AG04449 (cell line): ENCODE measurements at regions of chr2 and their contacts with region 1.

Region 1: DNA sequence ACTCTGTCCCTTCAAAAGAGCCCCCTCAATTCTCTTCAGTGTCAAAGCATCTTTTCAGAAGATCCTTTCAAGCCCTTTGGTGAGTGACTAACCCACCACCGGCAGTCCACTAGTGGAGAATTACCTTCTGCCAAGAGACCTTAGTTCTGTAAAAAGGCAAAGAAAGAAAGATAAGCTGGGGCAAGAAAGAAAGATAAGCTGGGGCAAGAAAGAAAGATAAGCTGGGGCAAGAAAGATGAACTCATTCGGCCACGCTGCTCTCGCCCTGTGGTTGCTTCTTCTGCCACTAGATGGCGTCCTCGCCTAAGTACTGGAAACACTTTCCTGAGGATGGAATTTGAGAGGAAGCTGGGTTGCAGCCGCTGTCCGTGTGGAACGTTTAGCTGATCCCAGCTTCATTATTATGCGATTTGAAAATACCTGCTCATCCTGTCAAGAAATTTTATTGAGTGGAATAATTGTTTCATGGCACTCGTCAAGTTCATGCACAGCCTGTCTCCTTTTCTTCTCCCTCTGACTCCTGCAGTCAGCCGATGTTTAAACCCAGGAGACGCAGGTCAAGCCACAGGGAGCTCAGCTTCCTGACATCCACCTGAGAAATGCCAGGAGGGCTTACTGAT is 17.3 kb upstream of the ANXA4 start:
- DNase-seq: no peak
- H3K4me3 ChIP-seq: peak overlapping the region; percentile 47
- CTCF ChIP-seq: peak; percentile 79

Region 2: DNA sequence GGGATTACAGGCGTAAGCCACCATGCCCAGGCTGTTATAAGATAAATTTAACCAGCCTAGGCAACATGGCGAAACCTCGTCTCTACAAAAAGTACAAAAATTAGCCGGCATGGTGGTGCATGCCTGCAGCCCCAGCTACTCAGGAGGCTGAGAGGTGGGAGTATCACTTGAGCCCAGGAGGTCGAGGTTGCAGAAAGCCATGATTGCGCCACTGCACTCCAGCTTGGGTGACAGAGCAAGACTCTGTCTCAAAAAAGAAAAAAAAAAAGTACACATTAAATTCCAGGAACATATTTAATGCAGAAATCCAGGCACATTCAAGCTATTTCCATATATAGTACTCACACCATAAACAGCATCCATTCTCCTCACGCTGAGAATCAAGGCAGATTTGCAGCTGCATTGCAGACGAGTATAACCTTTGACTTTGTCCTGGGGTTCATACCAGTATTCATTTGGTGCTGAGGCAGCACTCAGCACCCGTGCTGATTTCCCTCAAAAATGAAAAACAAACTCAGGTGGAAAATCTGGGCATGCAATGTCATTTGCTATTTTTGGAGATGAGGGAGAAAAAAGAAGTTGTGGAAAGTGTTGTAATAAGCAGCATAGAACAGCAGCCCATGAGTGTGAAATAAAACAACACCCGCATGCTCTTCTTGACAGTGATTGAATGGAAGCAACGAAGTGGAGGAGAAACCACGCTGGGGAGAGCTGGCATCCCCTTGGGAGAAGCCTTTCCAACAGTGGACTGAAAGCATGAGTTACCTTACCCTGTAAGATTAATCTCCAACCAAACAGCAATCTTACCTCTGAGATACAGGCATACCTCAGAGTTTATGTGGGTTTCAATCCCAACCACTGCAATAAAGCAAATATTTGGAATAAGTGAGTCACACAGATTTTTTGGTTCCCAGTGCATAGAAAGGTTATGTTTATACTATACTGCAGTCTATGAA is 29.5 kb before region 1 on chr2:
- CTCF ChIA-PET with region 1: interaction called, 14 read pairs
- POLR2A ChIA-PET with region 1: no interaction called
- DNase-seq: peak; percentile 88
- H3K4me3 ChIP-seq: no peak overlapping the region
- CTCF ChIP-seq: no peak

Region 3: DNA sequence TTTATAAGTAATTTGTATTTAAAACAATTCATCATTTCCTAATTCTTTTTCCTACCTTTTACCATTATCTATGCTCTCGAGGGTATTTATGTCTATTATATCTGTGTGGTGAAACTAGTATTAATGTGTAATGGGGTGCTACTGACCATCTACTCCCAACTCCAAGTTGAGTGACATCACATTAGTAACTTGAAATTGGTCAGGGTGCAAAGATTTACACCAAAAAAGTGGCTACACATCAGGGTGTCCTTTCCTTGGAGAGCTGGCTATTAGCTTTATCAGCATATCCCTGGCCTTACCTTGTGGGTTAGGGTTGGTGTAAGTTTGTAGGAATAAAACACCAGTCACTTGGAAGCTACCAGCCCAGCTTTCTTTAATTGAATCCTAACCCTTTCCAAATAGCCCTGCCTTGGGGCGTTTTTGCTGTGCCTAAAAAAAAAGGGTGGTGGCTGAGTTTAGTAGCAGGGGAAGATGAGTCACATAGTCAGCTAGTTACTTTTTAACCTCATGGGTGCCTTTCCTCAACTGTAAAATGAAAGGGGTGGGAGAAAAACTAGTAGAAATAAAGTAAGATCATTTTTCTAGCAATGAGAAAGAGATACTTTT is 31.3 kb after region 1 on chr2:
- CTCF ChIA-PET with region 1: interaction called, 20 read pairs
- POLR2A ChIA-PET with region 1: no interaction called
- DNase-seq: no peak
- H3K4me3 ChIP-seq: no peak overlapping the region
- CTCF ChIP-seq: no peak

Region 4: GRCh38 chr2:69798909-69799526 is 74.4 kb after region 1 on chr2:
- CTCF ChIA-PET with region 1: interaction called, 788 read pairs
- POLR2A ChIA-PET with region 1: no interaction called
- DNase-seq: no peak
- H3K4me3 ChIP-seq: 0 out of 2 replicates have a peak overlapping the region, but pooled peaks have one; percentile 33
- CTCF ChIP-seq: no peak

Region 5: GRCh38 chr2:69893684-69894551 is 169.3 kb after region 1 on chr2 and contains the start of gene SNRNP27:
- CTCF ChIA-PET with region 1: interaction called, 32 read pairs
- POLR2A ChIA-PET with region 1: no interaction called
- DNase-seq: no peak
- H3K4me3 ChIP-seq: peak within 1 kb of the TSS; percentile 79
- CTCF ChIP-seq: no peak

Region 6: DNA sequence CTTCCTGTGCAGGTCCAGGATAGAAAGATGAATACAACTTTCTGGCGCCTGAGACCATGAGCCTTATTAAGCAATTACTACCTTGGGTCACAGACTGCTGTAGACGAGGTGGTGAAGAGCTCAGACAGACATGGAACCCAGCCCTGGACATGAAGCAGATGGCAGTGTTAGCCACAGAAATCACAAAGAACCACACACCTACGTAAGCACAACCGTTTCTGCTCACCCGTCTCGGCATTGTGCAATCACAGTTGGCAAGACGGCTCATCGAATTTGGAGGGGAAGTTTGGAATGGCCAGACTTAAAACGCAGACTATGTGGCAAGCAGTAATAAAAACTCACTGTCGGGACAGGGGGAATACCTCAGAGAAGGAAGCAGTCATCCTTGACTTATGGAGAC is 261.0 kb after region 1 on chr2:
- CTCF ChIA-PET with region 1: no interaction called
- POLR2A ChIA-PET with region 1: no interaction called
- DNase-seq: no peak
- H3K4me3 ChIP-seq: no peak overlapping the region
- CTCF ChIP-seq: no peak